ENCODE measurements at regions of chr18 and their contacts with region 1.

Region 1: DNA sequence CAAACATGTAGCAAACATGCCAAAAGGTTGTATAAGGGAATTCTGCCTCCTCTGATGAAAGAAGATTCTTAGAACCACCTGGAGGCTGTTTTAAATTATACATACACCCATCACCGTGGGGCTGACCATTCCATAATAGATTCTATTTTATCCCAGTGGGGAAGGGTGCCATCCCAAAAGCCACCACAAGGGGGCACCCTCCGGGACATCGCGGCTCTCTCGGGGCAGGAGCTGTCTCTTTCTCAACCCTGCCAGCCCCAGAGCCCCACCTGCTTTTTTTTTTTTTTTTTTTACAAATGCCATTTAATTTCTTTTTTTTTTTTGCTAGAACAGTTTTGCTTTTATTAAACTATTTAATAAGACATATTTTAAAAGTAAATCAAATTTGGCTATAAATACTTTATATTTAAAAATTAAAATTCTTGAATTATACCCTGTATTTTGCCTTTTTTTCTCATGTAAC is 8.6 kb upstream of the MTCL1 start:
- DNase-seq: no peak
- H3K4me3 ChIP-seq: no peak overlapping the region
- CTCF ChIP-seq: peak; percentile 88

Region 2: GRCh38 chr18:8571399-8571798 is 125.4 kb before region 1 on chr18:
- CTCF ChIA-PET with region 1: no interaction called
- POLR2A ChIA-PET with region 1: no interaction called
- DNase-seq: no peak
- H3K4me3 ChIP-seq: no peak overlapping the region
- CTCF ChIP-seq: no peak

Region 3: GRCh38 chr18:8608795-8609658 is 87.8 kb before region 1 on chr18 and contains the start of gene RAB12:
- CTCF ChIA-PET with region 1: no interaction called
- POLR2A ChIA-PET with region 1: no interaction called
- DNase-seq: no peak
- H3K4me3 ChIP-seq: peak within 1 kb of the TSS; percentile 82
- CTCF ChIP-seq: peak; percentile 52

Region 4: GRCh38 chr18:8635087-8635486 is 61.7 kb before region 1 on chr18:
- CTCF ChIA-PET with region 1: no interaction called
- POLR2A ChIA-PET with region 1: no interaction called
- DNase-seq: no peak
- H3K4me3 ChIP-seq: no peak overlapping the region
- CTCF ChIP-seq: no peak

Region 5: DNA sequence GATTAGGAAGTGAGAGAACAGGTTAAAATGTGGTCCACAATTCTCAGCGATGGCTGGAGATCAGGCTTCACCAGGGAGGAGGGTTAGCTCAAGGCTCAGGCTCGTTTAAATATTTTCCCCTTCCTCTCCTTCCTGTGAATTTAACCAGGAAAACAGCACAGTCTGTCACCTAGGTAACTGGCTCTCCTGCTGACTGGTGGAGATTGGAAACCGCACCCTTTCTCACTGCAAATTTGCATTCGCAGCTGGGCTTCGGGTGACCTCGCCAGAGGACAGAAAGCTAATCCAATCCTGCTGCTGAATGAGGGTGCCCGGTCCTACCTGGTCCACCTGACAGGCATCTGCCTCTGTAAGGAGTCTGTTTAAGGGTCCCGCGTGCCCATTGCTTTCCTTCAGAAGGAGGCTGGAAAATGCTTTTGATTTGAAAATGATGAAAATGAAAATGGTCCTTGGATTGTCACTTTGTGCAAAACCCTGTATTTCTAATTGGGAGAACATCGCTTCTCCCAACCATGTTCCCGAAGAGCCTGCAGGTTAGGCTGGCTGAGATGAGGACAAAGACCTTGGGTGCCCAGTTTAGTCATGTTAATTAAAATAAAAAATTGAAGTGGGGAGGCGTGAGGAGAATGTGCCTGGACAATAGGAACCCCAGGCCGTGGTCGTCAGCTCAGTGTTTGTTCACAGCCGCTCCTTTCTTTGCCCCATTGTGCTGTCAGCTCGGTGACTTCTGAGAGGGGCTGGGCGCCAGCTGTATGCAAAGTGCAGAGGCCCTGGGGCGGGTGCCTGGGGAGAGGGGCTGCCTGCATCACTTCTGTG is 34.8 kb before region 1 on chr18:
- CTCF ChIA-PET with region 1: interaction called, 25 read pairs
- POLR2A ChIA-PET with region 1: no interaction called
- DNase-seq: no peak
- H3K4me3 ChIP-seq: no peak overlapping the region
- CTCF ChIP-seq: no peak

Region 6: DNA sequence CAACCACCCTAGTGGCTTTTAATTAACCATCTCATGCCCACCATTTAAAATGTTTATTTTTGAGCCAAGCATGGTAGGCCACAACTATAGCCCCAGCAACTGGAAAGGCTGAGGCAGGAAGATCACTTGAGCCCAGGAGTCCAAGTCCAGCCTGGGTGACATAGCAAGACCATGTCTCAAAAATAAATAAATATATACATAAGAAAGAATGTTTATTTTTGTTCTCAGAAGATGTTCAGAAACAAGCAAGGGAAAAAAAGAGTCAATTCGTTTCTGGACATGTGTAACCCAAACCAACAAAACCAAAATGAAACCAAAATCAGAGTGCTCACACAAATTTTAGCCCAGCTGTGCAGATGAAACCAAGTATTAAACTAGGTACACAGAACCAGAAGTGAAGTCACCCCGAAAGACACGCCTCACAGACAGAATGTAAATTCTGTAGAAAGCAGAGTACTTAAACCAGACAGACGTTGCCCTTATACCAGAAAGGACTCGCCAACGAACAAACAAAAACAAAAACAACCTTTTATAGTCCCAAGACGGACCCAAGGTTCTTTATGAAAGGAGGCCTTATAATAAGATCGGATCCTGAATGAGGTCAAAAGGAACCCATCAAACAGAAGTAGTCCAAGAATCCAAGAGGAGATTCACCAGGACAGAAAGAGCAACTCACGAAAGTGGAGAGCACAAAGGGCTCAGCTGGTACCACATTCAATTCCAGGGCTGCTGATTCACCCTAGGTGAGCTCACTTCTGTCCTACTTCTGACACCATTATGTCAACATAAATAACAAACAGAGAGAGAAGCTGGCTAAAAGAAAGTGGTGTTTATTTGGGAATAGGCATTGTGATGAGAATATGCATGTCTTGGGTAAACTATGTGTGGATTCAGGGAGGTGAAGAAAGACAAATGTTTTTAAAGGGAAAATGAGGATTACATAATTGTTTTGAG is 23.2 kb before region 1 on chr18:
- CTCF ChIA-PET with region 1: interaction called, 49 read pairs
- POLR2A ChIA-PET with region 1: no interaction called
- DNase-seq: no peak
- H3K4me3 ChIP-seq: no peak overlapping the region
- CTCF ChIP-seq: no peak

Region 7: DNA sequence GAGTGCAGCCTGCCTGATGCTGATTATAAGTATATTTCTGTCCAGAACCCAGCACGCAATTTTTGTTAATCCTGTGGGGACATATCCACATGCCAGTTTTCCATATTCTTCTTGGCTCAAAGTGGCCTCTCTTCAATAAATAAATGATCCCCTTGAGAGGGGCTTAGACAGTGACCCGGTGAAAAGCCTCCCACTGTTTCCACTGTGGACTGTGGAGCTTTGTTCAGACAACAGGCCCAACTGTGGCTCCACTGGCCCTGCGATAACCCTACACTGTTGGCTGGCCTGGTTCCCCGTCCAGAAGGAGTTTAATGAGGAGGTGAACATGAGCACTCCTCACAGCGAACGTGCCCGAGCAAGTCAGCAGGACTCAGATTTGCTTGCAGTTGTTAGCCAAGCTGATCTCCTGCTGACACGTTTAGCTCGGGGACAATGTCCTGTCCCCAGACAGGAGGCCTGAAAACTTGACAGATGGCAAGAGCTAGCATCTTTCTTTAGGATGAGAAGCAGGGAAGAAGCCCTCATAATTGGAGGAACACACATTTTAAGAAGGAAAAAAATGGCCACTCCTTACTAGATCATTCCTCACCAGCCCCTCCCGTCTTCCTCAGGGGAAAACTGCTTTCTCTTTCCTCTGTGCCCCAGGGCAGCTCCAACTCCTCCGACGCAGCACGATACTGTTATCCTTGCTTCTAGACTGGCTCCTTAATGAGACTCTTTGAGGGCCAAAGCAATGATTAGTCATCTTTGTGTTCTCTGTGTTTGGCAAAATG is 11.5 kb before region 1 on chr18:
- CTCF ChIA-PET with region 1: interaction called, 71 read pairs
- POLR2A ChIA-PET with region 1: no interaction called
- DNase-seq: no peak
- H3K4me3 ChIP-seq: no peak overlapping the region
- CTCF ChIP-seq: no peak

Measured in AG04449 (cell line).